CD8-positive, alpha-beta T cell (primary cell): ENCODE measurements at regions of chr11 and their contacts with region 1.

Region 1: GRCh38 chr11:36265793-36266628 is 23.2 kb downstream of the COMMD9 start:
- DNase-seq: peak; percentile 13 to 72 (median 48)
- ATAC-seq: peak; percentile 63
- H3K4me3 ChIP-seq: no peak overlapping the region
- H3K4me3 Mint-ChIP-seq: no peak overlapping the region
- H3K27ac ChIP-seq: no peak overlapping the region
- H3K27ac Mint-ChIP-seq: no peak overlapping the region
- H3K4me1 ChIP-seq: no peaks in the 10 kb centered on the region
- H3K4me1 Mint-ChIP-seq: no peaks in the 10 kb centered on the region
- H3K27me3 ChIP-seq: no peaks in the 10 kb centered on the region
- H3K27me3 Mint-ChIP-seq: peaks cover 18% of the 10 kb centered on the region
- CTCF ChIP-seq: peak; percentile 71

Region 2: GRCh38 chr11:35610631-35611030 is 655.4 kb before region 1 on chr11:
- CTCF ChIA-PET with region 1: interaction called, 31 read pairs
- POLR2A ChIA-PET with region 1: no interaction called
- intact Hi-C with region 1: no loop called
- DNase-seq: no peak
- ATAC-seq: no peak
- H3K4me3 ChIP-seq: no peak overlapping the region
- H3K4me3 Mint-ChIP-seq: no peak overlapping the region
- H3K27ac ChIP-seq: no peak overlapping the region
- H3K27ac Mint-ChIP-seq: no peak overlapping the region
- H3K4me1 ChIP-seq: no peaks in the 10 kb centered on the region
- H3K4me1 Mint-ChIP-seq: no peaks in the 10 kb centered on the region
- H3K27me3 ChIP-seq: peaks cover 0 to 4% of the 10 kb centered on the region in 2 experiments
- H3K27me3 Mint-ChIP-seq: peaks cover 39% of the 10 kb centered on the region
- CTCF ChIP-seq: no peak

Region 3: GRCh38 chr11:36278531-36279282 is 12.7 kb after region 1 on chr11:
- CTCF ChIA-PET with region 1: interaction called, 19 read pairs
- POLR2A ChIA-PET with region 1: no interaction called
- intact Hi-C with region 1: no loop called
- DNase-seq: no peak
- ATAC-seq: no peak
- H3K4me3 ChIP-seq: no peak overlapping the region
- H3K4me3 Mint-ChIP-seq: no peak overlapping the region
- H3K27ac ChIP-seq: no peak overlapping the region
- H3K27ac Mint-ChIP-seq: no peak overlapping the region
- H3K4me1 ChIP-seq: no peaks in the 10 kb centered on the region
- H3K4me1 Mint-ChIP-seq: peaks cover 11% of the 10 kb centered on the region
- H3K27me3 ChIP-seq: no peaks in the 10 kb centered on the region
- H3K27me3 Mint-ChIP-seq: no peaks in the 10 kb centered on the region
- CTCF ChIP-seq: no peak